AG04450 (cell line): ENCODE measurements at regions of chr17 and their contacts with region 1.

Region 1: GRCh38 chr17:75319904-75320691 is 30.9 kb upstream of the SLC25A19 start:
- DNase-seq: peak; percentile 16
- H3K4me3 ChIP-seq: no peak overlapping the region
- H3K27ac ChIP-seq: peak overlapping the region; percentile 11
- H3K27me3 ChIP-seq: no peaks in the 10 kb centered on the region
- CTCF ChIP-seq: no peak

Region 2: GRCh38 chr17:75345514-75346167 is 25.5 kb after region 1 on chr17:
- CTCF ChIA-PET with region 1: interaction called, 20 read pairs
- POLR2A ChIA-PET with region 1: interaction called, 3 read pairs
- DNase-seq: no peak
- H3K4me3 ChIP-seq: no peak overlapping the region
- H3K27ac ChIP-seq: no peak overlapping the region
- H3K27me3 ChIP-seq: no peaks in the 10 kb centered on the region
- CTCF ChIP-seq: no peak

Region 3: DNA sequence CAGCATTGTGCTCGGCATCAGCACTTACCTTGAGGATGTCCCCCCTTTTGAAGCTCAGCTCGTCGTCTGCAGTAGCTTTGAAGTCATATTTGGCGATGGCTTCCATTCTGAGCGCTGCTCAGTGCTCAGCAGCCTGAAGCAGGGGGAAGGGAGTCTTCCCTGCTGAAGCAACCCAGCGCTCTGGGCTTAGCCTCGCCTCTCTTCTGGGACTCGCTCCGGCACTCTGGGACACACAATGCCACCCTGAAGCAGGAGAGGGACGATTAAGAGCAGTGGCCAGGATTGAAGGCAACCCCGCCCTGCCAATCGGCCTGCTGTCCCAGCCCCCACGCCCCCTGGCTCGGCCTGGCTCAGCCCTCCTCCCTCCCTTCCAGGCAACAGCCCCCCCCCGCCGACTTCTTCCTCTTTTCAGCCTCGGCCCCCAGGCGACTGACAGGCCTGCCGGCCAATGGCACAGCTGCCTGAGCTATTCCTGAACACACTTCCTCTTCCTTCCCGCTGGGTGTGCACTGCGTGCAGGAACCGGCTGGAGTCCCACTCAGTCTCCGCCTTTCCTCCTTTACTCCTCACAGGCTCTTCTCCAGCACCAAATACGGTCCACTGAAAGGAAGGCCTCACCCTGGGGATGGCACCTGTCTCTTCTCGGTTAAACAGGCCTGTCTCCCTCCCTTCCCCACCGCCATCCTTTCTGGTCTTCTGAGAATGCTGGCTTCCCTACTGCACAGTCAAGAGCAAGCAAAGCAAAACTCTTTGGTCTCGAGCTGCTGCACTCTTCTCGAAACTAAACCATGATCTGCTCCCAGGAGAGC is 73.6 kb after region 1 on chr17:
- CTCF ChIA-PET with region 1: interaction called, 12 read pairs
- POLR2A ChIA-PET with region 1: interaction called, 9 read pairs
- DNase-seq: peak; percentile 96
- H3K4me3 ChIP-seq: peak overlapping the region; percentile 80
- H3K27ac ChIP-seq: peak overlapping the region; percentile 71
- H3K27me3 ChIP-seq: no peaks in the 10 kb centered on the region
- CTCF ChIP-seq: no peak

Region 4: GRCh38 chr17:75405365-75406221 is 85.5 kb after region 1 on chr17 and contains the start of gene GRB2:
- CTCF ChIA-PET with region 1: interaction called, 21 read pairs
- POLR2A ChIA-PET with region 1: interaction called, 13 read pairs
- DNase-seq: peak; percentile 89
- H3K4me3 ChIP-seq: peak within 1 kb of the TSS; percentile 93
- H3K27ac ChIP-seq: peak within 1 kb of the TSS; percentile 65
- H3K27me3 ChIP-seq: peaks cover 2% of the 10 kb centered on the region
- CTCF ChIP-seq: no peak
- polyA plus RNA-seq, gene GRB2: 53.9 and 63.8 TPM in 2 replicates